ENCODE measurements at regions of chr7 and their contacts with region 1.

Region 1: DNA sequence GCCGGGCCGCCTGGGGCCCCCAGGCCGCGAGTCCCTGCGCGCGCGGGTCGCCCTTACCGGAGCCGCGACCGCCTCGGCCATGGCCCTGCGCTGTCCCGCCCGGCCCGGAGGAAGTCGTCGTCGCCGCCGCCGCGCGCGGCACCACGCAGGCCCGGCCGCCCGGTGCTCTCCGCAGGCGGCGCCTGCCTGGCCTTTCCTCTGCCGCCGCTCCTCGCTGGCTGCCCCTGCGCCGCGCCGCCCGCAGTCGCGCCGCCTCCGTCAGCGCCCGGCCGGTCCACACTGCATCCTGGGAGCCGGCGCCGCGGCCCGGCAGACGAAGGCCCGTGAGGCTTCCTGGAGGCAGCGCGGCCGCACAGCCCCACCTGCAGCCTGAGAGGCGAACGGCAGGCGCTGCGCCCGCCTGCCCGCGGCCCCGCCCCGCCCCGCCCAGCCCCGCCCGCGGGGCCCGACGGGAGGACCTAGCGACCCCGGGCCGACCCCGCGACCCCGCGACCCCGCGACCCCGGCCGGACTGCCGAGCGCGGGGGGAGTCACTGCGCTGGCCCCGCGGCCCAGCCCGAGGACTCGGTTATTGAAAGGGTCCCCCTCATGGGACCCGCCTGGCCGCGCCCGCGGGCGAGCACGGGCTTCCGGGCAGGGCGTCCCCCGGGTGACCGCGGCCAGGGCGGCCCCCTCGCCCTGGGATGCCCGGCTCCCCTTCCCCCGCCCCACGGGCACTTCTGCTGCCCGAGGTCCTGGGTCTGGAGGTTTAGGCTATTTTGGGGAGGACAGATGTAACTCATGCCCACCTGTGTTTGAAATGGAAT is at the start of gene ZNF746:
- DNase-seq: peak; percentile 65 to 85
- H3K4me3 ChIP-seq: peak within 1 kb of the TSS; percentile 94
- H3K27ac ChIP-seq: 0 out of 2 replicates have a peak within 1 kb of the TSS, but pooled peaks have one; percentile 8
- H3K4me1 ChIP-seq: peaks cover 17% of the 10 kb centered on the region
- H3K27me3 ChIP-seq: no peaks in the 10 kb centered on the region
- CTCF ChIP-seq: 0 out of 2 replicates have a peak, but pooled peaks have one; percentile 24
- total RNA-seq, gene ZNF746: 19.2 and 19.3 TPM in 2 replicates

Region 2: DNA sequence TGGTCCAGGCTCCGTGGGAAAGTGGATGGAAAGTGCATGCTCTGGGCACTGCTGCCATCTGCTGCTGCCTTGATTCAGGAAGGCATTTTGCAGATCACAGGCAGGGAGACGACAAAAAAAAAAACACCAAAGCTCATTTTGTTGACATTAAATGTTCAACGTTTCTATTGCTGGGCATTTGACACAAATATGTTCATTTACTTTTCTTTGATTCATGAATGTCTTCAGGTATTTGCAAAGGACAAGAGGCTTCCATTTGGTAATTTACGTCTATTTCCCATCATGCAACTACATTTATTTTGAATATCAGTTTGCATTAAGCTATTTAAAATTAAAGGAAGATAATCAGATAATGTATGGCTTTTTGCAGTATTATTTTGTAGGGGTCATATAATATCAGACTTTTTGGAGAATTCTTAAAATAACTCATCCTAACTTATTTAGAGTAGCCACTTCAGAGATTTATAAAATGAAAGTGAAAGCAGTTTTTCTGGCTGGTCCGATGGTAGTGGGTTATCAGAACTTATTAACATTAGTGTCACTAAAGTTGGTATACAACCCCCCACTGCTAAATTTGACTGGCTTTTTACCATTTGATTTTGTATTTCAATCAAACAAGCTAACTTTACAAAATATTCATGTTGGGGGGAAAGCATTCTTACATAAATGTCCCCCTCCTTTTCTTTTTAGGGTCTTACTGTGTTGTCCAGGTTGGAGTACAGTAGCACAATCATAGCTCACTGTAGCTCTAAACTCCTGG is 534.7 kb before region 1 on chr7:
- CTCF ChIA-PET with region 1: no interaction called
- POLR2A ChIA-PET with region 1: no interaction called
- intact Hi-C with region 1: loop called (anchors 10 kb)
- DNase-seq: peak; percentile 47 to 62
- H3K4me3 ChIP-seq: peak overlapping the region; percentile 56
- H3K27ac ChIP-seq: no peak overlapping the region
- H3K4me1 ChIP-seq: no peaks in the 10 kb centered on the region
- H3K27me3 ChIP-seq: no peaks in the 10 kb centered on the region
- CTCF ChIP-seq: peak; percentile 85

Region 3: GRCh38 chr7:149122199-149122575 is 375.5 kb before region 1 on chr7:
- CTCF ChIA-PET with region 1: no interaction called
- POLR2A ChIA-PET with region 1: no interaction called
- intact Hi-C with region 1: no loop called
- DNase-seq: no peak
- H3K4me3 ChIP-seq: no peak overlapping the region
- H3K27ac ChIP-seq: no peak overlapping the region
- H3K4me1 ChIP-seq: peaks cover 8% of the 10 kb centered on the region
- H3K27me3 ChIP-seq: no peaks in the 10 kb centered on the region
- CTCF ChIP-seq: no peak

Region 4: GRCh38 chr7:149133028-149133705 is 364.5 kb before region 1 on chr7:
- CTCF ChIA-PET with region 1: no interaction called
- POLR2A ChIA-PET with region 1: no interaction called
- intact Hi-C with region 1: no loop called
- DNase-seq: no peak
- H3K4me3 ChIP-seq: no peak overlapping the region
- H3K27ac ChIP-seq: no peak overlapping the region
- H3K4me1 ChIP-seq: peaks cover 3% of the 10 kb centered on the region
- H3K27me3 ChIP-seq: no peaks in the 10 kb centered on the region
- CTCF ChIP-seq: no peak

Region 5: GRCh38 chr7:149195180-149196150 is 302.2 kb before region 1 on chr7 and contains the start of gene ZNF282:
- CTCF ChIA-PET with region 1: no interaction called
- POLR2A ChIA-PET with region 1: no interaction called
- intact Hi-C with region 1: loop called (anchors 2 kb)
- DNase-seq: peak; percentile 90 to 94
- H3K4me3 ChIP-seq: peak within 1 kb of the TSS; percentile 91
- H3K27ac ChIP-seq: peak within 1 kb of the TSS; percentile 75
- H3K4me1 ChIP-seq: peaks cover 17% of the 10 kb centered on the region
- H3K27me3 ChIP-seq: no peaks in the 10 kb centered on the region
- CTCF ChIP-seq: peak; percentile 69
- total RNA-seq, gene ZNF282: 32.5 and 35.9 TPM in 2 replicates

Region 6: GRCh38 chr7:149261829-149262617 is 235.6 kb before region 1 on chr7 and contains the start of gene ZNF783:
- CTCF ChIA-PET with region 1: interaction called, 3 read pairs
- POLR2A ChIA-PET with region 1: no interaction called
- intact Hi-C with region 1: loop called (anchors 2 kb)
- DNase-seq: peak; percentile 74 to 90
- H3K4me3 ChIP-seq: peak within 1 kb of the TSS; percentile 89
- H3K27ac ChIP-seq: peak within 1 kb of the TSS; percentile 74
- H3K4me1 ChIP-seq: peaks cover 16% of the 10 kb centered on the region; the same call in 1 of the 2 replicates
- H3K27me3 ChIP-seq: no peaks in the 10 kb centered on the region
- CTCF ChIP-seq: peak; percentile 68
- total RNA-seq, gene ZNF783: 15.8 and 22.2 TPM in 2 replicates

Region 7: DNA sequence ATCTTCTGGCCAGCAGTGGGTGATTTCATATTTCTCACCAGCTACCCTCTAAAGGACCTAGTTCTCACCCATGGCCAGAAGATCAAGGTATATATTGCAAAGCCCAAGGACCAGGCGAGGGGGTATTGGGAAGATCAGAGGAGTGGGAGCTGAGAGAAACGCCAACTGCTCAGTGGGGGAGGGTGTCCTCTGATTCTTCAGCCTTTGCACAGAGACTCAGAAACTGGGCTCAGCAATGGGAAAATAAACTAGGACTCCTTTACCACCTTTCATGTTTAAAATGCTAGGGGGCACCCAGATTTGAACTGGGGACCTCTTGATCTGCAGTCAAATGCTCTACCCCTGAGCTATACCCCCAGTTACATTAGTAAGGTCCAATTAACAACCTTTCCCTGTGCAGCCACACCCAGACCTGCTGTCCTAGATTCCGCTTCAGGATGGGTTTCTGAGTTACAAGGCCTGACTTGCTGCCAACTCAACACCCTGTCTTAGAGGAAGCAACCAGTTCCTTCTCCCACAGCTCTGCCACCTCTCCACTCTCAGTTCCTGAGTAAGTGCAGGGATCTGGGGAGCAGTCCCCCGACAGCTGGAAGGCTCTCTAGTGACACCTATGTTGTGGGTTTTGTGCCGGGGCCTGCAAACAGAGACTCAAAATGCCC is 142.1 kb before region 1 on chr7:
- CTCF ChIA-PET with region 1: no interaction called
- POLR2A ChIA-PET with region 1: no interaction called
- intact Hi-C with region 1: loop called (anchors 5 kb)
- DNase-seq: peak; percentile 93 to 95
- H3K4me3 ChIP-seq: peak overlapping the region; percentile 38; the same call in 1 of the 2 replicates
- H3K27ac ChIP-seq: peak overlapping the region; percentile 58
- H3K4me1 ChIP-seq: peaks cover 23% of the 10 kb centered on the region
- H3K27me3 ChIP-seq: no peaks in the 10 kb centered on the region
- CTCF ChIP-seq: peak; percentile 53; the same call in 1 of the 2 replicates

Region 8: GRCh38 chr7:149460493-149461277 is 37.0 kb before region 1 on chr7 and contains the start of gene ZNF777:
- CTCF ChIA-PET with region 1: no interaction called
- POLR2A ChIA-PET with region 1: interaction called, 20 read pairs
- intact Hi-C with region 1: no loop called
- DNase-seq: peak; percentile 74 to 76
- H3K4me3 ChIP-seq: peak within 1 kb of the TSS; percentile 72
- H3K27ac ChIP-seq: no peak within 1 kb of the TSS
- H3K4me1 ChIP-seq: peaks cover 12% of the 10 kb centered on the region
- H3K27me3 ChIP-seq: no peaks in the 10 kb centered on the region
- CTCF ChIP-seq: peak; percentile 44; the same call in 1 of the 2 replicates
- total RNA-seq, gene ZNF777: 10.6 and 13.3 TPM in 2 replicates

Region 9: DNA sequence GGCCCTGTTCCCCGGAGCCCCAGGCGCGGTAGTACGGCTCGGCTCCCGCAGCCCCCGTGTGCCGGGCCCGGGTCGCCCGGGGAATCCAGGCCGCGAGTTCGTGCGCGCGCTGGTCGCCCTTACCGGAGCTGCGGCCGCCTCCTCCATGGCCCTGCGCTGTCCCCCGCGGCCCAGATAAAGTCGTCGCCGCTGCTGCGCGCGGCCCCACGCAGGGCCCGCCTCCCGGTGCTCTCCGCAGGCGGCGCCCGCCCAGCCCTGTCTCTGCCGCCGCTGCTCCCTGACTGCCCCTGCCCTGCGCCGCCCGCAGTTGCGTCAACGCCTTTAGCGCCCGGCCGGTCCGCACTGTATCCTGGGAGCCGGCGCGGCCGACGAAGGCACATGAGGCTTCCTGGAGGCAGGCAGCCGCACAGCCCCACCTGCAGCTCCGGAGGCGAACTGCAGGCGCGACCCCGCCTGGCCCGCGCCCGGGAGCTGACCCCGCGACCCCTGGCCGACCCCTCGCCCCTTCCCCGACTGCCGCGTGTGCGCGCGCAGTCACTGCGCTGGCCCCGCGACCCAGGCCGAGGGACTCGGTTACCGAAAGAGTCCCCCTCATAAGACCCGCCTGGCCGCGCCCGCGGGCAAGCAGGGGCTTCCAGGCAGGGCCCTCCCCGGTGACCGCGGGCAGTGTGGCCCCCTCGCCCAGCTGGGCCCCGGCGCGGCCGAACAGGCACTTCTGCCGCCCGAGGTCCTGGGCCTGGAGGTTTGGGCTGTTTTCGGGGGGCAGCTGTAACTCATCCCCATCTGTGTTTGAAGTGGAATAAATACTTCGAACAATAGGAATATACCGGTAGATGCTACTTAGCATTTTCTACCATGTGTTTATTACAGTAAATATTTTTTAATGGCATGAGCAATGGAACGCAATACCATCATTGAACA is 127.0 kb after region 1 on chr7:
- CTCF ChIA-PET with region 1: no interaction called
- POLR2A ChIA-PET with region 1: no interaction called
- intact Hi-C with region 1: loop called (anchors 5 kb)
- DNase-seq: peak; percentile 85 to 96
- H3K4me3 ChIP-seq: peak overlapping the region; percentile 89
- H3K27ac ChIP-seq: 0 out of 2 replicates have a peak overlapping the region, but pooled peaks have one; percentile 33
- H3K4me1 ChIP-seq: peaks cover 21% of the 10 kb centered on the region
- H3K27me3 ChIP-seq: peaks cover 11% of the 10 kb centered on the region
- CTCF ChIP-seq: peak; percentile 91

Region 10: GRCh38 chr7:149635561-149636329 is 138.1 kb after region 1 on chr7:
- CTCF ChIA-PET with region 1: no interaction called
- POLR2A ChIA-PET with region 1: no interaction called
- intact Hi-C with region 1: no loop called
- DNase-seq: peak in 1 of 2 experiments; percentile 53
- H3K4me3 ChIP-seq: no peak overlapping the region
- H3K27ac ChIP-seq: no peak overlapping the region
- H3K4me1 ChIP-seq: no peaks in the 10 kb centered on the region
- H3K27me3 ChIP-seq: peaks cover 37% of the 10 kb centered on the region
- CTCF ChIP-seq: no peak

Region 11: GRCh38 chr7:149670288-149670687 is 172.6 kb after region 1 on chr7:
- CTCF ChIA-PET with region 1: no interaction called
- POLR2A ChIA-PET with region 1: no interaction called
- intact Hi-C with region 1: no loop called
- DNase-seq: no peak
- H3K4me3 ChIP-seq: no peak overlapping the region
- H3K27ac ChIP-seq: no peak overlapping the region
- H3K4me1 ChIP-seq: peaks cover 16% of the 10 kb centered on the region
- H3K27me3 ChIP-seq: no peaks in the 10 kb centered on the region
- CTCF ChIP-seq: no peak